GM23248 (cell line): ENCODE measurements at regions of chr7 and their contacts with region 1.

Region 1: DNA sequence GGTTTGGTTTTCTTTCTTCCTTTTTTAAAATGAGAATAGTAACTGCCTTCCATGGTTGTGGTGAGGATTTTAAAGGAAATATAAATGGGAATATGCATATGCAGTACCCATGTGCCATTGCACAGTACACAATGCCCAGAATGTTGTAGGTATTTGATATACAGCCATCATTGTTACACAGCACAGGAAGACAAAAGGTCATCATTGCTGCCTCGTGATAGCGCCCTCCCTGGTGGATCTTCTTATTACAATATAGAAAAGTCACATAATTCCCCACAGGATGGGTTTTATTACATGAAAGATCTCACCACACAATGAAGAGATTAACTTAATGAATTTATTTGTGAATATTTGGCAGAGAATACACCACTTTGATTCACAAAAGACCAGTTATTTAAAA is 76.5 kb downstream of the PPP1R17 start:
- DNase-seq: no peak
- H3K4me3 ChIP-seq: no peak overlapping the region
- H3K27ac ChIP-seq: no peak overlapping the region
- H3K4me1 ChIP-seq: 0 out of 2 replicates have a peak, but pooled peaks cover 6% of the 10 kb centered on the region
- H3K27me3 ChIP-seq: no peaks in the 10 kb centered on the region

Region 2: GRCh38 chr7:32495298-32496176 is 732.0 kb after region 1 on chr7 and contains the start of gene AVL9:
- in situ Hi-C with region 1: loop called (anchors 25 kb)
- DNase-seq: peak; percentile 99
- H3K4me3 ChIP-seq: peak within 1 kb of the TSS; percentile 86
- H3K27ac ChIP-seq: peak within 1 kb of the TSS; percentile 82
- H3K4me1 ChIP-seq: peaks cover 13% of the 10 kb centered on the region
- H3K27me3 ChIP-seq: no peaks in the 10 kb centered on the region
- total RNA-seq, gene AVL9: 12.0 and 13.3 TPM in 2 replicates